Left lung (tissue), 14 donors: ENCODE measurements at regions of chr5 and their contacts with region 1.

Region 1: GRCh38 chr5:71782771-71783770 is 64.0 kb downstream of the CARTPT start:
- DNase-seq: peak in 3 of 4 donors; percentile 71 to 87 (median 78)
- ATAC-seq: peak; percentile 95
- H3K4me3 ChIP-seq: no peak overlapping the region
- H3K27ac ChIP-seq: no peak overlapping the region
- H3K4me1 ChIP-seq: peaks cover 0 to 8% of the 10 kb centered on the region in 2 donors
- H3K27me3 ChIP-seq: no peaks in the 10 kb centered on the region
- CTCF ChIP-seq: peak; percentile 31 to 71

Region 2: GRCh38 chr5:71537687-71538086 is 245.4 kb before region 1 on chr5:
- intact Hi-C with region 1: no loop called
- DNase-seq: no peak
- ATAC-seq: no peak
- H3K4me3 ChIP-seq: no peak overlapping the region
- H3K27ac ChIP-seq: no peak overlapping the region
- H3K4me1 ChIP-seq: peaks cover 0 to 7% of the 10 kb centered on the region in 2 donors
- H3K27me3 ChIP-seq: no peaks in the 10 kb centered on the region
- CTCF ChIP-seq: no peak

Region 3: GRCh38 chr5:72020320-72021009 is 237.4 kb after region 1 on chr5:
- intact Hi-C with region 1: loop called in 1 of 2 experiments (anchors 5 kb)
- DNase-seq: no peak
- ATAC-seq: no peak
- H3K4me3 ChIP-seq: no peak overlapping the region
- H3K27ac ChIP-seq: no peak overlapping the region
- H3K4me1 ChIP-seq: peaks cover 0 to under 1% of the 10 kb centered on the region in 2 donors
- H3K27me3 ChIP-seq: peaks cover 0 to 4% of the 10 kb centered on the region in 2 donors
- CTCF ChIP-seq: no peak